ENCODE measurements at regions of chr19 and their contacts with region 1.

Region 1: GRCh38 chr19:48674921-48675824 is 2.4 kb upstream of the NTN5 start:
- DNase-seq: peak; percentile 90 to 98
- ATAC-seq: peak; percentile 80 to 95
- H3K4me3 ChIP-seq: no peak overlapping the region
- H3K27ac ChIP-seq: peak overlapping the region; percentile 38 to 65; a peak in 5 of 6 replicates
- H3K4me1 ChIP-seq: peaks cover 5% of the 10 kb centered on the region; the same call in 1 of the 3 replicates
- CTCF ChIP-seq: peak; percentile 95
- EP300 ChIP-seq: no peak
- POLR2A ChIP-seq: no peak
- RAD21 ChIP-seq: peak; percentile 78 to 81

Region 2: DNA sequence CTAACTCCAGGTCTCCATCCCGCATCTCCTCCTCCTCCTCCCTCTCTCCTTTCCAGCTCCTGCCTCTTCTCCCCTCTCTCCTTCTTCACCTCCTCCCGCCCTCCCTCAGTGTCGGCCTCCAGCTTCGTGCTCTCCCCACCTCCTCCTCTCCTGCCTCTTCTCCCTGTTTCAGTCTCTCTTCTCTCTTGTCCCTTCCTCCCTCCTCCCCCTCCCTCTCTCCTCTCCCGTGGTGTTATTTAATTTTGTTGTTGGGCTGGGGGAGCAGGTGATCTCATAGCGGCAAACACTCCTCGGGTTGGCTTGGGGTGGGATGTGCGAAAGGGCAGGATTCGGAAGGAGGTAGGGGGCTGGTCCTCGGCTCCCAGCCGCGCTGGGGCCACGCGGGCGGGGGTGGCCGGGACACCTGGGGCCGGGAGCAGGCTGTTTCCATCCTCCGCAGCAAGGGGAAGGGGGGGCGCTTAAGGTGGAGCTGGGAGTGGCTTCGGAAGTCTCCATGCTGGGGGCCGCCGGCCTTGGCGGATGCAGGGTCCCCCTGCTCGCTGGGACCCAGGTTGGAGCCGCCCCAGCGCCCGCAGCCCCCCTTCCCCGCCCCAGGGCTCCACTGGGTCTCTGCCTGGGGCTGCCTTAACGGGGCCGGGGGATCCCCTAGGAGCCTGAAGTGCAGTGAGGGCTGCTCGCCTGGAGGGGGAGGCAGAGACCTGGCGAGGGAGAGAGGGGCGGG is 29.0 kb before region 1 on chr19 and contains the start of gene CA11:
- CTCF ChIA-PET with region 1: interaction called, 39 read pairs
- POLR2A ChIA-PET with region 1: no interaction called
- DNase-seq: peak; percentile 91 to 97
- ATAC-seq: peak; percentile 85 to 90
- H3K4me3 ChIP-seq: peak within 1 kb of the TSS; percentile 54
- H3K27ac ChIP-seq: peak within 1 kb of the TSS; percentile 87 to 88
- H3K4me1 ChIP-seq: peaks cover 18% of the 10 kb centered on the region; the same call in 2 of the 3 replicates
- CTCF ChIP-seq: peak; percentile 90
- EP300 ChIP-seq: no peak
- POLR2A ChIP-seq: no peak; the same call in 1 of the 2 replicates
- RAD21 ChIP-seq: peak; percentile 97 to 98
- polyA plus RNA-seq, gene CA11: 8.8 and 9.8 TPM in 2 replicates

Region 3: GRCh38 chr19:48660854-48661731 is 14.1 kb before region 1 on chr19:
- CTCF ChIA-PET with region 1: interaction called, 68 read pairs
- POLR2A ChIA-PET with region 1: interaction called, 3 read pairs
- DNase-seq: peak; percentile 91 to 96
- ATAC-seq: peak; percentile 70 to 88
- H3K4me3 ChIP-seq: no peak overlapping the region
- H3K27ac ChIP-seq: peak overlapping the region; percentile 5 to 61; a peak in 3 of 6 replicates
- H3K4me1 ChIP-seq: no peaks in the 10 kb centered on the region
- CTCF ChIP-seq: no peak
- EP300 ChIP-seq: no peak
- POLR2A ChIP-seq: no peak
- RAD21 ChIP-seq: no peak

Region 4: GRCh38 chr19:48713864-48714758 is 38.9 kb after region 1 on chr19:
- CTCF ChIA-PET with region 1: interaction called, 21 read pairs
- POLR2A ChIA-PET with region 1: interaction called, 3 read pairs
- DNase-seq: peak; percentile 100
- ATAC-seq: peak; percentile 92
- H3K4me3 ChIP-seq: peak overlapping the region; percentile 68
- H3K27ac ChIP-seq: peak overlapping the region; percentile 86 to 90
- H3K4me1 ChIP-seq: peaks cover 16% of the 10 kb centered on the region
- CTCF ChIP-seq: no peak
- EP300 ChIP-seq: no peak
- POLR2A ChIP-seq: peak; percentile 83
- RAD21 ChIP-seq: no peak

Region 5: DNA sequence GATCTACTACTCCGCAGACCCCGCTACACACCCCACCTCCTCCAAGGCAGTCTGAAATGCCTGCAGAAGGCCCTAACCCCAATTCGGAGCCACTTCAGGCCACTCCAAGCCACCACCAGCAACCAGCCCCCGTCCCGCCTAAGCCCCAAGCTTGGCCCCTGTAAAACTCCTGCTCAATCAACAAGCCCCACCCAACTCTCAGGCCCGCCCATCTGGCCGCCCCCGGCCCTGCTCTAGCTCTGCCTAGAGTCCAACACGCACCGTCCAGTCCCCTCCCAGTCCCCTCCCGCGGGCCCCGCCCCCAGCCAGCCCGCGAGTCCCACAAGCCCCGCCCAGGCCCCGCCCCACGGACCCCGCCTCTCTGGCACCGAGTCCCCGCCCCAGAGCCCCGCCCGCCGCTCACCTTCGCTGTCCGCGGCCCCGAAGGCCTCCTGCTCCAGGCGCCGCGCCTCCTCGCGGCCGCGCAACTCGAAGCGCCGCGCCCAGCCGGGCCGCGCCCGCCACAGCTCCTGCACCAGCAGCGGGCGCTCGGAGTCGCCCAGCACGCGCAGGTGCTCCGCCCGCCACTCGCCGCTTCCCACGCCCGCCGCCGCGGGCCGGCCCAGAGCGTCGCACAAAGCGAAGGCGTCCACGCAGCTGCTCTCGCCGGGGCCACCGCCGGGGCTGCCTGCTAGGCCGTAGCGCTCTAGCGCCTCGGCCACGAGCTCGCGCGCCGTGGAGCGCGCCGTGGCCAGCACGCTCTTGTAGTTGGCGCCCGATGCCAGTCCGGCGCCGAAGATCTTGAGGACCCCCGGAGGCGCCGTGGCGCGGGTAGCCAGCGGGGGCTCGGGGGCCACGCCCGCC is 63.6 kb after region 1 on chr19:
- CTCF ChIA-PET with region 1: interaction called, 48 read pairs
- POLR2A ChIA-PET with region 1: no interaction called
- DNase-seq: peak; percentile 87 to 95
- ATAC-seq: peak; percentile 80 to 85
- H3K4me3 ChIP-seq: peak overlapping the region; percentile 59
- H3K27ac ChIP-seq: peak overlapping the region; percentile 82 to 89
- H3K4me1 ChIP-seq: peaks cover 16% of the 10 kb centered on the region
- CTCF ChIP-seq: peak; percentile 92
- EP300 ChIP-seq: no peak
- POLR2A ChIP-seq: peak; percentile 64
- RAD21 ChIP-seq: peak; percentile 34 to 81; a peak in 4 of 5 replicates

Region 6: GRCh38 chr19:48780631-48781391 is 105.6 kb after region 1 on chr19:
- CTCF ChIA-PET with region 1: interaction called, 36 read pairs
- POLR2A ChIA-PET with region 1: no interaction called
- DNase-seq: peak in 1 of 2 experiments; percentile 62
- ATAC-seq: peak in 1 of 2 experiments; percentile 13; a peak in 3 of 6 replicates
- H3K4me3 ChIP-seq: no peak overlapping the region
- H3K27ac ChIP-seq: 0 out of 6 replicates have a peak overlapping the region, but pooled peaks of 1 of the 2 experiments have one; percentile 29
- H3K4me1 ChIP-seq: peaks cover 10% of the 10 kb centered on the region
- CTCF ChIP-seq: no peak
- EP300 ChIP-seq: no peak
- POLR2A ChIP-seq: no peak
- RAD21 ChIP-seq: no peak

Measured in A549 (cell line).